Activated CD4-positive, alpha-beta memory T cell treated with anti-CD3 and anti-CD28 coated beads for 36 hours (primary cell): ENCODE measurements at regions of chr16 and their contacts with region 1.

Region 1: DNA sequence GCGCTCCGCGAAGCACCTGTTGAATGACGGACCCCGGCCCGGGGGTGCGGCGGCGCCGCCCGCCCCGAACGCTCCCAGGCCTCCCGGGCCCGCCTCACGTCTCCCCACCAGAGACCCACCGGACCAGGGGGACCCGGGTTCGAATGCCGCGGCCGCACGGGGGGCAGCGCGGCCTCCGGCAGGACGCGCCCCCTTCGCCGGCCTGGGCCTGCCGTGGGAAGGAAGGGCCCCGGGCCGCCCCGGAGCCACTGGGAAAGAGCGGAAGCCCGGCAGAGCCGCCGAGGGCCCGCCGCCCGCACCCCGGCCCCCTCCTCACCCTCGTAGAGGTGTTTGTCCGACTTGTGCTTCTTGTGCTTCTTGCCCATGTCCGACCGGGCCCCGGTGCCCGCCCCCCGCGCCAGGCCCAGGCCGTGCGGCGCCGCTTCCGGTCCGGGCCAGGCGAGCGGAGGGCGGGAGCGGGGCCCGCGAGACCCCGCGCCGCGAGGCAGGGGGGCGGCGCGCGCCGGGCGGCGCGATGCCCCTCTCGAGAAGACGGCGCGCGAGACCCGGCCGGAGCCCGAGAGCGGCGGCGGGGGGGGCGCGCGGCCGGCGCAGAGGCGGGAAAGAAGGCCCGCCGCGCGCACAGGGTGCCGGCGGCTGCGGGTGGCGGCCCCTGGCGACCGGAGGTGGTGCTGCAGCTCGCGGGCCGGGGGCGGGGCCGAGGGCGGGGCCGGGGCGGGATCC is at the start of gene BRD7:
- DNase-seq: peak; percentile 80
- H3K4me3 Mint-ChIP-seq: peak within 1 kb of the TSS; percentile 89
- H3K27ac Mint-ChIP-seq: peak within 1 kb of the TSS; percentile 80
- H3K4me1 Mint-ChIP-seq: peaks cover 45% of the 10 kb centered on the region
- H3K27me3 Mint-ChIP-seq: no peaks in the 10 kb centered on the region
- total RNA-seq, gene BRD7: 87.9 to 103 TPM

Region 2: GRCh38 chr16:50065624-50066481 is 302.7 kb before region 1 on chr16 and contains the start of gene HEATR3:
- CTCF ChIA-PET with region 1: no interaction called
- POLR2A ChIA-PET with region 1: no interaction called
- intact Hi-C with region 1: loop called (anchors 2 kb)
- DNase-seq: peak; percentile 98
- H3K4me3 Mint-ChIP-seq: peak within 1 kb of the TSS; percentile 90
- H3K27ac Mint-ChIP-seq: peak within 1 kb of the TSS; percentile 87
- H3K4me1 Mint-ChIP-seq: peaks cover 31% of the 10 kb centered on the region
- H3K27me3 Mint-ChIP-seq: no peaks in the 10 kb centered on the region
- total RNA-seq, gene HEATR3: 17.6 to 18.6 TPM

Region 3: DNA sequence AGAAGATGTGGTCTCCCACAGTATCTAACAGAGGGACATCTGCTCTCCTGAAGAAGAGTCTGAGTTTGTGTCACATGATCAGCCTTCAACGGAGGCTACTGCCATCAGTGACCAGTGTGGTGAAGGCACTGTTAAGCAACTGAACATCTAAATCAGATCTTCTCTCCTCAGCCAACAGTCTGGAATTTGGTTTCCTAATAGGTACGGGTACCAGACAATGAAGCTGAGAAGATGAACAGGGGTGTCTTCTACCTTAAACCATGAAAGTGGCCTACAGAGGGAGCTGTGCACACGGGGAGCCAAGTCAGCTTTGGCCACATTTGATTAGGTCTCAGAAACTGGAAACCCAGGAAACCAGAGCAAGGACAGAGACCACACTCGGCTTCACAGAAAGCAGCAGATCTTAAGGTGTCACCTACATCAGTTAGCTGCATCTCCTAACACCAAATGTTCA is 41.6 kb before region 1 on chr16:
- CTCF ChIA-PET with region 1: interaction called, 14 read pairs
- POLR2A ChIA-PET with region 1: no interaction called
- intact Hi-C with region 1: loop called (anchors 1 kb)
- DNase-seq: peak; percentile 81
- H3K4me3 Mint-ChIP-seq: no peak overlapping the region
- H3K27ac Mint-ChIP-seq: peak overlapping the region; percentile 45
- H3K4me1 Mint-ChIP-seq: peaks cover 59% of the 10 kb centered on the region
- H3K27me3 Mint-ChIP-seq: no peaks in the 10 kb centered on the region

Region 4: DNA sequence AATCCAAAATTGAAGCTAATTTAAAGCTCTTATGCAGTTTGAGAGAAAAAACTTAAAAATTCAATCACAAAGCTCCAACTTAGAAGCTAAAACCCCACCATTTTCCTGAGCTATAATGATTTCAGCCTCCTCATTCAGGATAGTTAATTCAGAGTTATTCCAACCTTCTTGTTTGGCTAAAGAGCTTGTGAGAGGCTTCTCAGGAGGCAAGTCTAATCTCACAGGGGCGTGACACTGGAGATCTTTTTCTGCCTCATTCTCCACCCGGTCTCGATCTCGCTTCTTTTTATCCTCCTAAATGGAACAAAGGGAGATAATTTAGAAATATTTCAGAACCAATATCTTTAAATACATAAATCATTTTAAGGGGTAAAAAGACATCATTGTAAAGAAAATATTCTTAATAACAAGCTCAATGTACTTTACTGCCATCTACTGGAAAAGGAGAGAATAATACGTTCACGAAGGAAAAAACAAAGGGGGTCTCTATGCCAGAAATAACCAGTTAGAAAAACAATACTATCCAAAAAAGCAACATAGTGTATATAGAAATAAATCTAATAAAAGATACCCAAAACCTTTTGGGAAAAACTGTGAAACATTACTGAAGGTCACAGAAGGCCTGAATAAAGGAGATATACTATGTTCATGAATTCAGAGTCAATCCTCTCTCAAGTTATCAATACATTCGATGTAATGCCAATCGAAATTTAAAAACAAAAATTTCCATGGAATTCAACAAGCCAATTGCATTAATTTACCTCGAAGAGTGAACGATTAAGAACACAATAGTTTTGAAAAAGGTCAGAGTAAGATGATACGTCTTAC is 13.7 kb before region 1 on chr16:
- CTCF ChIA-PET with region 1: interaction called, 26 read pairs
- POLR2A ChIA-PET with region 1: no interaction called
- intact Hi-C with region 1: no loop called
- DNase-seq: no peak
- H3K4me3 Mint-ChIP-seq: no peak overlapping the region
- H3K27ac Mint-ChIP-seq: no peak overlapping the region
- H3K4me1 Mint-ChIP-seq: peaks cover 30% of the 10 kb centered on the region
- H3K27me3 Mint-ChIP-seq: no peaks in the 10 kb centered on the region

Region 5: DNA sequence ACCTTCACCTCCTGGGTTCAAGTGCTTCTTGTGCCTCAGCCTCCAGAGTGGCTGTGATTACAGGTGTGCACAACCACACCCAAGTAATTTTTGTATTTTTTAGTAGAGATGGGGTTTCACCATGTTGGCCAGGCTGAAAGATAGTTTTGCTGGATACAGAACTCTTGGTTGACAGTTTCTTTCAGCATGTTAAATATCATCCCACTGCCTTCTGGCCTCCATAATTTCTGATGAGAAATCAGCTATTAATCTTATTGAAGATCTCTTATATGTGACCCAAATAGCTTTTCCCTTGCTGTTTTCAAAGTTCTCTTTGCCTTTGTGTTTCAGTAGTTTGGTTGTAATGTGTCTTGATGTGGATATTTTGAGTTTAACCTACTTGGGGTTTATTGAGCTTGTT is 50.5 kb after region 1 on chr16:
- CTCF ChIA-PET with region 1: no interaction called
- POLR2A ChIA-PET with region 1: no interaction called
- intact Hi-C with region 1: no loop called
- DNase-seq: no peak
- H3K4me3 Mint-ChIP-seq: no peak overlapping the region
- H3K27ac Mint-ChIP-seq: no peak overlapping the region
- H3K4me1 Mint-ChIP-seq: no peaks in the 10 kb centered on the region
- H3K27me3 Mint-ChIP-seq: peaks cover 8% of the 10 kb centered on the region

Region 6: DNA sequence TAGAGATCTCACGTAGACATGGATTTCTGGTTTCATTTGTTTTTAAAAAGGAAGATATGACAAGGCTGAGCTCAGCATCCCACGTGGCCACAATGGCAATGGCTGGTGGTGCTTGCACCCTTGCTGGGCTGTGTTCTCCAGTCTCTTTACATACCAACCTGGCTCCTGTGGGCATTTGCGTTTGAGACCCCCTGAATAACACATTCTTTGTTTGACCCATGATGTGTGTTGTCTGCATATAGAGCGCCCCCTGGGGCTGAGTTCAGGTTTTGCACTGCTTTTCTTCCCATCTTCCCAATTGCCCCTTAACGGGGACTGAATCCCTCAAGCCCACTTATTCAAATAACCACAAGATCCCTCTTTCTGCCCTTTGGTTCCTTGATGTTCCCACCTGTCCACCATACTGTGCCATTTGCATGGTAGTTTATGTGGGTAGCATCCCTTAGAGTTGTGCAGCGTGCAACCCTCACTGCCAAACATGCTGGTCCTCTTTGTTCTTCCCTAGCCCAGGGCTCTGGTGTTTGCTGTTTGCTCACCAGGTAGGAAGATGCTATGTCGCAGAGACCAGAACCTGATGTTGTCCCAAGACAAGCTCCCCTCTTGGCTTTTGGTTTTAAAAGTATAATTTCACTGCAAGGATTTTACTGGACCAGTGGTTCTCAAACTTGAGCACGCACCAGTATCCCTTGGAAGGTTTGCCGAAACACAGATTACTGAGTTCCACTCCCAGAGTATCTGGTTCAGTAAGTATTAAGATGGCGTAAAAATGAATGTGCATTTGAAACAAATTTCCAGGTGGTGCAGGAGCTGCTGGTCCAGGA is 141.2 kb after region 1 on chr16:
- CTCF ChIA-PET with region 1: interaction called, 10 read pairs
- POLR2A ChIA-PET with region 1: no interaction called
- intact Hi-C with region 1: loop called (anchors 5 kb)
- DNase-seq: peak; percentile 66
- H3K4me3 Mint-ChIP-seq: no peak overlapping the region
- H3K27ac Mint-ChIP-seq: no peak overlapping the region
- H3K4me1 Mint-ChIP-seq: no peaks in the 10 kb centered on the region
- H3K27me3 Mint-ChIP-seq: no peaks in the 10 kb centered on the region

Region 7: GRCh38 chr16:50548125-50548908 is 179.7 kb after region 1 on chr16 and contains the start of gene NKD1:
- CTCF ChIA-PET with region 1: no interaction called
- POLR2A ChIA-PET with region 1: no interaction called
- intact Hi-C with region 1: loop called (anchors 5 kb)
- DNase-seq: peak; percentile 80
- H3K4me3 Mint-ChIP-seq: peak within 1 kb of the TSS; percentile 84
- H3K27ac Mint-ChIP-seq: peak within 1 kb of the TSS; percentile 9
- H3K4me1 Mint-ChIP-seq: peaks cover 7% of the 10 kb centered on the region
- H3K27me3 Mint-ChIP-seq: no peaks in the 10 kb centered on the region
- total RNA-seq, gene NKD1: 0.67 to 1.6 TPM

Region 8: GRCh38 chr16:50627419-50627818 is 258.8 kb after region 1 on chr16:
- CTCF ChIA-PET with region 1: no interaction called
- POLR2A ChIA-PET with region 1: no interaction called
- intact Hi-C with region 1: loop called (anchors 5 kb)
- DNase-seq: peak; percentile 62
- H3K4me3 Mint-ChIP-seq: no peak overlapping the region
- H3K27ac Mint-ChIP-seq: no peak overlapping the region
- H3K4me1 Mint-ChIP-seq: peaks cover 31% of the 10 kb centered on the region
- H3K27me3 Mint-ChIP-seq: no peaks in the 10 kb centered on the region